ENCODE measurements at regions of chr14 and their contacts with region 1.

Region 1: GRCh38 chr14:99982537-99983250 is 82.5 kb upstream of the EVL start:
- DNase-seq: peak; percentile 81
- H3K4me3 ChIP-seq: no peak overlapping the region; a peak in 1 of 4 replicates
- H3K27ac ChIP-seq: no peak overlapping the region
- H3K4me1 ChIP-seq: peaks cover 6 to 7% of the 10 kb centered on the region in 2 experiments; a peak in 1 of 4 replicates
- H3K27me3 ChIP-seq: no peaks in the 10 kb centered on the region
- CTCF ChIP-seq: peak; percentile 92
- EP300 ChIP-seq: no peak
- RAD21 ChIP-seq: peak; percentile 98

Region 2: GRCh38 chr14:99971087-99971940 is 11.4 kb before region 1 on chr14:
- CTCF ChIA-PET with region 1: interaction called, 10 read pairs
- POLR2A ChIA-PET with region 1: no interaction called
- DNase-seq: peak; percentile 98
- H3K4me3 ChIP-seq: peak overlapping the region; percentile 80 to 87
- H3K27ac ChIP-seq: peak overlapping the region; percentile 34 to 88; a peak in 3 of 4 replicates
- H3K4me1 ChIP-seq: peaks cover 11 to 19% of the 10 kb centered on the region in 2 experiments; a peak in 2 of 4 replicates
- H3K27me3 ChIP-seq: no peaks in the 10 kb centered on the region
- CTCF ChIP-seq: no peak
- EP300 ChIP-seq: no peak
- RAD21 ChIP-seq: no peak

Region 3: DNA sequence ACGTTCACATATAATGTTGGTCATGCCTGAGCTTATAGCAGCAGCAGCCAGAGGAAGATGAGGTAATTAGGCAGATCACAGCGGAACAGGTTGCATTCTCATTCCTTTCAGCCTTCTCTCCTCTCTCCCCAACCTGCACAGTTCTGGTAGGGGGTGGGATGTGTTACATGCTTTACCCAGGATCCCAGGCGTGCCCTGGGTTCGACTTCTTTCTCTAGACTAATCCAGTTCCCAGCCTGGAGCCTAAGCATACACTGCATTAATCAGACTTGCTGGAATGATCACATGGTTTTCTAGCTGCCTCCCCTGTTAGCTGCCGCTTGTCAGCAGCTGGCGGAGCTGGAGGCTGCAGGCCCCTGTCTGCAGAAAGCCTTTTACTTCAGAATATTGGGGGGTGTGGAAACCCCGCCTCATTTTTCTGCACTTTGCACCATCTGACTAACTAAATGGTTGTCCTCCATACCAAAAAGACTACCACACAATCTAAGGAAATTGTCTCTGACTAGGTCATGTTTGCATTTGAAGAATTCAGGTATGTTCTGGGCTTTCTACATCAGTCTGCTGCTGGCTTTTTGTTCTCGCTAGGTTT is 36.6 kb after region 1 on chr14:
- CTCF ChIA-PET with region 1: interaction called, 30 read pairs
- POLR2A ChIA-PET with region 1: no interaction called
- DNase-seq: peak; percentile 62
- H3K4me3 ChIP-seq: no peak overlapping the region
- H3K27ac ChIP-seq: peak overlapping the region in 1 of 2 experiments; percentile 72; a peak in 2 of 4 replicates
- H3K4me1 ChIP-seq: peaks cover 17 to 24% of the 10 kb centered on the region in 2 experiments
- H3K27me3 ChIP-seq: no peaks in the 10 kb centered on the region
- CTCF ChIP-seq: no peak
- EP300 ChIP-seq: no peak
- RAD21 ChIP-seq: peak; percentile 6; the same call in 1 of the 2 replicates

Region 4: GRCh38 chr14:100025111-100025510 is 42.4 kb after region 1 on chr14:
- CTCF ChIA-PET with region 1: interaction called, 30 read pairs
- POLR2A ChIA-PET with region 1: no interaction called
- DNase-seq: peak; percentile 56
- H3K4me3 ChIP-seq: no peak overlapping the region
- H3K27ac ChIP-seq: no peak overlapping the region
- H3K4me1 ChIP-seq: peaks cover 2 to 15% of the 10 kb centered on the region in 2 experiments; a peak in 3 of 4 replicates
- H3K27me3 ChIP-seq: no peaks in the 10 kb centered on the region
- CTCF ChIP-seq: peak; percentile 52
- EP300 ChIP-seq: no peak
- RAD21 ChIP-seq: peak; percentile 68

Region 5: DNA sequence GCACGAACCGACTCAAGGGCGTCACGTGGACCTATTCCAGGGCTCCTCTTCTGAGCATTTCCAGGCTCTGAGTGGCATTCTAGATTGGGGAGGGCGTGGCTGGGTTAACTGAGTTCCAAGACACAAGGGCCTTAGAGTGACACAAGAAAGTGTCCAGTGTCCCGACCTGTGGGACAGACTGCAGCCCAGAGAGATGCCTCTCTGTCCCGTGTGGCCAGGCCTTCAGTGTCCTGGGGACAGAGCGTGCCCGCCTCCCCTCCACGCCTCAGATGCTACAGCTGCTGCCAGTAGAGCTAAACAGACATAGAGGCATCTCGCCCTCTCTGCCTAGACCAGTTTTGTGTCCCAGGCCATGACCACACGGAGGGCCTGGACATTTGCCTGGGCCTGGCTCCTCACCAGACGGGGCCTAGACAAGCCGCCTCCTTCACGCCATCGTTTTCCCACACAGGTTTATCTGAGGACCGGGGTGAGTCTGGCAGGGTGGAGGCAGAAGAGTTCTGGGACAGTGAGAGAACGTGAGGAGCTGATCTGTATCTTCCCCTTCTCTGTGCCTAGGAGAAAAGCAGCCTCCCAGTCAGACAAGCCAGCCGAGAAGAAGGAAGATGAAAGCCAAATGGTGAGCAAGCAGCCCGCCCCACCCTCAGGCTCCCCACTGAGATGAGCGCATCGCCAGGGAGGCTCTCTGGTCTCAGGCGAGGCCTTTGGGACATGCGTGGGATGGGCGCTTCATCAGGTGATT is 149.6 kb after region 1 on chr14:
- CTCF ChIA-PET with region 1: interaction called, 16 read pairs
- POLR2A ChIA-PET with region 1: no interaction called
- DNase-seq: peak; percentile 58
- H3K4me3 ChIP-seq: no peak overlapping the region
- H3K27ac ChIP-seq: peak overlapping the region; percentile 28 to 74; a peak in 3 of 4 replicates
- H3K4me1 ChIP-seq: peaks cover 9 to 74% of the 10 kb centered on the region in 2 experiments; a peak in 3 of 4 replicates
- H3K27me3 ChIP-seq: no peaks in the 10 kb centered on the region
- CTCF ChIP-seq: no peak
- EP300 ChIP-seq: no peak
- RAD21 ChIP-seq: no peak

Region 6: DNA sequence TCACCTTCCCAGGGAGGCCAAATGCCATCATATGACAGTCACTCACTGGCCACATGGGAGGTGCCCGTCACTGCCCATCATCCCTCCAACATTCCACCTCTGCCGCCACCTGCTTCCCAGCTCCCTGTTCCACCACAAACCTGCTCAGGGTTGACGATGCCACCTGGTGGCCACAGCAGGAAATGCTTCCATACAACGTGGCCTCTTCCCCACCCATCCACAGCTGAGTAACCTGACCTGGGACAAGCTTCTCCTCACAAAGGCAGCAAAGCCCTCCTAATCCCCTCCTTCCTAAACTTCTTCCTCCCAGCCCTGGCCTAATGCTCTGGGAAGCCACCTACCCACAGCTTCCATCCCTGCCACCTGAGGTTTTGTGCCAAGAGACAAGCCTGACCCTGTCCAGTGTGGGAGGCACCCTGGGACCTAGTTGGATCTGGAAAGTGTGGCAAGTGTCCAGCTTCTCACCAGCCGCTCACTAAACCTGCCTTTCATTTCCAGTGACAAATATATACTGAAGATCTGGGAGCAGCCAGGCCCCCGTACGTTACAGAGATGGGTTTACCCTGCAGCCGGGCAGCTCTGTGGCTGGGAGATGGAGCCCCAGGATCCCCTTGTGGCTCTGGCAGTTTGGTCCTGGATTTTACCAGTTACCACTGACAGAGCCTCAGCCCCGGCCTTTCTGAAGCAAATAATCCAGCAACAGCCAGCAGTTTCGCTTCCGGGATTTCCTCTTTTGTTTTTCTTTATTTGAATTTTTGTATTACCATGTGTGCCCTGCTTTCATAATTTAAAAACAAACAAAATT is 172.6 kb after region 1 on chr14:
- CTCF ChIA-PET with region 1: interaction called, 17 read pairs
- POLR2A ChIA-PET with region 1: no interaction called
- DNase-seq: peak; percentile 64
- H3K4me3 ChIP-seq: no peak overlapping the region; a peak in 1 of 4 replicates
- H3K27ac ChIP-seq: peak overlapping the region in 1 of 2 experiments; percentile 14; a peak in 1 of 4 replicates
- H3K4me1 ChIP-seq: peaks cover 0 to 28% of the 10 kb centered on the region in 2 experiments; a peak in 2 of 4 replicates
- H3K27me3 ChIP-seq: peaks cover 6% of the 10 kb centered on the region
- CTCF ChIP-seq: peak; percentile 58
- EP300 ChIP-seq: no peak
- RAD21 ChIP-seq: no peak